Activated T-helper 2 cell treated with anti-CD3 and anti-CD28 coated beads, Interferon-gamma antibody, Interleukin-2, Interleukin-4, amounts not matched to agents 10 μg/mL and 5 μg/mL and 100 μg/mL, durations not matched to agents 14 hours and 24 hours and 36 hours (primary cell): ENCODE measurements at regions of chr17 and their contacts with region 1.

Region 1: GRCh38 chr17:17151962-17152361 is 54.2 kb downstream of the PLD6 start:
- DNase-seq: no peak
- H3K4me3 Mint-ChIP-seq: no peak overlapping the region
- H3K27ac Mint-ChIP-seq: peak overlapping the region; percentile 55
- H3K4me1 Mint-ChIP-seq: peaks cover 41% of the 10 kb centered on the region
- H3K27me3 Mint-ChIP-seq: no peaks in the 10 kb centered on the region

Region 2: GRCh38 chr17:17179371-17179827 is 27.4 kb after region 1 on chr17:
- intact Hi-C with region 1: loop called (anchors 2 kb)
- DNase-seq: peak; percentile 24
- H3K4me3 Mint-ChIP-seq: peak overlapping the region; percentile 72
- H3K27ac Mint-ChIP-seq: peak overlapping the region; percentile 92
- H3K4me1 Mint-ChIP-seq: peaks cover 71% of the 10 kb centered on the region
- H3K27me3 Mint-ChIP-seq: no peaks in the 10 kb centered on the region

Region 3: DNA sequence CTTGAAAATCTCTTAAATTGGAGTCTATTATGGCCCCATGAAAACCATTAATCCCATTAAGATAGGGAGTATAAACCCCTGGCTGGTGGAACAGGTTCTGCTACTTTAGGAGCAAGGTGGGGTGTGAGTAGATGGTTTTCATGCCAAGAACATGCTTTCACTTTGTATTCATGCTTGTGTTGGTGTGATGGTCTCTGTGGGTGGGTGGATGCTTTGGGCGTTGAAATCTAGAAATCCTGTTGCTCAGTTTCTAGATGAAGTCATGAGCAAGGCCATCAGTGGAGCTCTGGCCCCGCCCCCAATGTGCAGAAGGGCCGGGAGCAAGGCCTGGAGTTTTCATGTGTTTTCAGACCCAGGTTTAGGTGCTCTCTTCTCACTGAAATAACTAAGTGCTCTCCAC is 34.1 kb after region 1 on chr17:
- intact Hi-C with region 1: loop called (anchors 2 kb)
- DNase-seq: peak; percentile 62
- H3K4me3 Mint-ChIP-seq: peak overlapping the region; percentile 67
- H3K27ac Mint-ChIP-seq: peak overlapping the region; percentile 90
- H3K4me1 Mint-ChIP-seq: peaks cover 56% of the 10 kb centered on the region
- H3K27me3 Mint-ChIP-seq: no peaks in the 10 kb centered on the region

Region 4: GRCh38 chr17:17246879-17247278 is 94.9 kb after region 1 on chr17:
- intact Hi-C with region 1: no loop called
- DNase-seq: no peak
- H3K4me3 Mint-ChIP-seq: no peak overlapping the region
- H3K27ac Mint-ChIP-seq: no peak overlapping the region
- H3K4me1 Mint-ChIP-seq: no peaks in the 10 kb centered on the region
- H3K27me3 Mint-ChIP-seq: no peaks in the 10 kb centered on the region

Region 5: DNA sequence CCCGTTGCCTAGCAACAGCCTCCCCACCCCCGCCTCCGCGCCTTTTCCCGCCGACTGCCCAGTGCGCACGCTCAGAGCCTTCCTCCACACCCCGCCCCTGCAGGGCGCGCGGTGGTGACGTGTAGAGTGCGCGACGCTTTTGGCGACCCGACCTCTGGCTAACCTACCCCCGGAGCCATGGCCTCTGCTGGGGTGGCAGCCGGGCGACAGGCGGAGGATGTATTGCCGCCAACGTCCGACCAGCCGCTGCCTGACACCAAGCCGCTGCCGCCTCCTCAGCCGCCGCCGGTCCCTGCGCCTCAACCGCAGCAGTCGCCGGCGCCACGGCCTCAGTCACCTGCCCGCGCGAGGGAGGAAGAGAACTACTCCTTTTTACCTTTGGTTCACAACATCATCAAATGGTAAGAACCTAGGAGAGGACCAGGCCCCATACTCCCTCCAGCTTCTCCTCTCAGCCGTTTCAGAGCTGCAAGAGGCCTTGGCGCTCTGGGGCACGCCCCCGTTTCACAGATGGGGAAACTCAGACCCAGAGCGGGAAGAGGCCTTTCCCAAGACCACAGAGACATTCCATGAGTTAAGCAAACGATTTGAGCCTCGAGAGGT is 325.0 kb after region 1 on chr17 and contains the start of gene MED9:
- intact Hi-C with region 1: no loop called
- DNase-seq: peak; percentile 90
- H3K4me3 Mint-ChIP-seq: peak within 1 kb of the TSS; percentile 90
- H3K27ac Mint-ChIP-seq: peak within 1 kb of the TSS; percentile 79
- H3K4me1 Mint-ChIP-seq: peaks cover 32% of the 10 kb centered on the region
- H3K27me3 Mint-ChIP-seq: peaks cover 8% of the 10 kb centered on the region
- total RNA-seq, gene MED9: 12.6 and 13.1 TPM in 2 replicates